PC-9 (cell line): ENCODE measurements at regions of chr6 and their contacts with region 1.

Region 1: DNA sequence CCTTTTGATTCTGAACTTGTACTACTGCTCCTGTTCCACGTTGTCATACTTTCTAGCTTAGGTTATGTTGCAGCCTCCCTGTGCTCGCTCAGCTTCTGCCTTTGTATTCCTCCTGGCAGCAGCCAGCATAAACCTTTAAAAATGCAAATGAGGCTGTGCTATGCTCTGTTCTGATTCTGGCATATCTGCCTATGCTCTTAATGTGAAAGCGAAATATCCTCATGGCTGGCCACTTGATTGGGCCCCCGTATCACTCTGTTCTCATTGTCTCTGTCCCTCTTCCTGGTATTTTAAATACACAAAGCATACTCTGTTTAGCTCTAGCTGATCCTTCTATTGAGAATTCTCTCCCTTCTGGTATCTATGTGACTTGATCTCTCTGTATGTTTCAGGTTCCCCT is 139.0 kb downstream of the JARID2 start:
- DNase-seq: no peak
- H3K4me3 ChIP-seq: no peak overlapping the region
- H3K27ac ChIP-seq: no peak overlapping the region
- H3K4me1 ChIP-seq: no peaks in the 10 kb centered on the region
- H3K27me3 ChIP-seq: no peaks in the 10 kb centered on the region
- CTCF ChIP-seq: no peak

Region 2: GRCh38 chr6:15303162-15303919 is 81.6 kb before region 1 on chr6:
- CTCF ChIA-PET with region 1: interaction called, 13 read pairs
- POLR2A ChIA-PET with region 1: no interaction called
- intact Hi-C with region 1: no loop called
- DNase-seq: no peak
- H3K4me3 ChIP-seq: no peak overlapping the region
- H3K27ac ChIP-seq: no peak overlapping the region
- H3K4me1 ChIP-seq: peaks cover 18% of the 10 kb centered on the region
- H3K27me3 ChIP-seq: no peaks in the 10 kb centered on the region
- CTCF ChIP-seq: no peak

Region 3: GRCh38 chr6:15404685-15404980 is 19.7 kb after region 1 on chr6:
- CTCF ChIA-PET with region 1: no interaction called
- POLR2A ChIA-PET with region 1: interaction called, 10 read pairs
- intact Hi-C with region 1: no loop called
- DNase-seq: no peak
- H3K4me3 ChIP-seq: no peak overlapping the region
- H3K27ac ChIP-seq: no peak overlapping the region
- H3K4me1 ChIP-seq: peaks cover 32% of the 10 kb centered on the region
- H3K27me3 ChIP-seq: no peaks in the 10 kb centered on the region
- CTCF ChIP-seq: no peak

Region 4: GRCh38 chr6:15653581-15653980 is 268.7 kb after region 1 on chr6:
- CTCF ChIA-PET with region 1: no interaction called
- POLR2A ChIA-PET with region 1: no interaction called
- intact Hi-C with region 1: no loop called
- DNase-seq: no peak
- H3K4me3 ChIP-seq: no peak overlapping the region
- H3K27ac ChIP-seq: no peak overlapping the region
- H3K4me1 ChIP-seq: no peaks in the 10 kb centered on the region
- H3K27me3 ChIP-seq: no peaks in the 10 kb centered on the region
- CTCF ChIP-seq: no peak